ENCODE measurements at regions of chr6 and their contacts with region 1.

Region 1: GRCh38 chr6:145836170-145836569 is 21.6 kb upstream of the FBXO30 start:
- DNase-seq: no peak
- H3K4me3 Mint-ChIP-seq: no peak overlapping the region
- H3K27ac Mint-ChIP-seq: no peak overlapping the region
- H3K4me1 Mint-ChIP-seq: peaks cover 7% of the 10 kb centered on the region
- H3K27me3 Mint-ChIP-seq: no peaks in the 10 kb centered on the region

Region 2: GRCh38 chr6:145823328-145823944 is 12.7 kb before region 1 on chr6:
- intact Hi-C with region 1: loop called (anchors 1 kb)
- DNase-seq: no peak
- H3K4me3 Mint-ChIP-seq: no peak overlapping the region
- H3K27ac Mint-ChIP-seq: no peak overlapping the region
- H3K4me1 Mint-ChIP-seq: peaks cover 35% of the 10 kb centered on the region
- H3K27me3 Mint-ChIP-seq: peaks cover 3% of the 10 kb centered on the region